CD4-positive, alpha-beta T cell (primary cell): ENCODE measurements at regions of chr7 and their contacts with region 1.

Region 1: DNA sequence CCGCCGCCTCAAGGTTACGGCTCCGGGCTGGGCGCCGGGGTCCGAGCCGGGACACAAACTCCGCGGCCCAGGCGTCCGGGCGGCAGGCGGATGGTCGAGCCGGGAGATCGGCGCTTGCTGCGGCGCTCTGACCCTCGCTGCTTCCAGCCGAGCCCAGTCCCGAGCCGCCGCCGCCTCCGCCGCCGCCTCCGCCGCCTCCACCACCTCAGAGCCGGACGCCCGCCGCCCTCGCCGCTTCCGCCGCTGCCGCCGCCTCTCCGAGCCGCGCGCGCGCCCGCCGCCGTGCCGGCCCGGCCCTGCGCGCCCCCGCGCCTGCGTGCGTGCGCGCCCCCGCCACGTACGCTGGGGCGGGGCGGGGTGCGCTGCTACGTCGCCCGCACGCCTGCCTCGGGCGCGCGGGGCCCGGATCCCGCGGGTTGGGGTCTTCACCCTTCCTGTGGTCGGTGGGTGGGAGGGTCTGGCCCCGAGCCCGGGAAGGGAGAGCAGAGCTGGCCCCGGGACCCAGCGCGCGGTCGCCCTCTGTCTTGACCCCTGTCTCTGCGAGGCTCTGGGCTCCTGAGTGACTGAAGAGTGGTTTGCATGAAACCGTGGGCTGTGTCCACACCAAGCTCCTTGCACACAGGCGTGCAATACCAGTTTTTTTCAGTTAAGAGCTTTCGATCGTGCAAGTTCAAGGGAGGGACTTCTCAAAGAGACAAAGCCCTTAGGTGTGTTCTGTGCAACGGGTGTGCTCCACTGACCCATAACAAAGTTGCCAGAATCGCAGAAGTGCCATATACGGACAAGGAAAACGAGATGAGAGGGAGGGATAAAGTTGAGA is at the start of gene SMURF1:
- DNase-seq: peak; percentile 52 to 93 (median 70)
- ATAC-seq: peak; percentile 42
- H3K4me3 ChIP-seq: peak within 1 kb of the TSS; percentile 88
- H3K4me3 Mint-ChIP-seq: peak within 1 kb of the TSS; percentile 96
- H3K27ac ChIP-seq: peak within 1 kb of the TSS; percentile 64 to 71
- H3K27ac Mint-ChIP-seq: peak within 1 kb of the TSS; percentile 96
- H3K4me1 ChIP-seq: peaks cover 28% of the 10 kb centered on the region
- H3K4me1 Mint-ChIP-seq: peaks cover 40% of the 10 kb centered on the region
- H3K27me3 ChIP-seq: no peaks in the 10 kb centered on the region
- H3K27me3 Mint-ChIP-seq: no peaks in the 10 kb centered on the region
- CTCF ChIP-seq: no peak
- total RNA-seq, gene SMURF1: 30.0 to 32.4 TPM

Region 2: DNA sequence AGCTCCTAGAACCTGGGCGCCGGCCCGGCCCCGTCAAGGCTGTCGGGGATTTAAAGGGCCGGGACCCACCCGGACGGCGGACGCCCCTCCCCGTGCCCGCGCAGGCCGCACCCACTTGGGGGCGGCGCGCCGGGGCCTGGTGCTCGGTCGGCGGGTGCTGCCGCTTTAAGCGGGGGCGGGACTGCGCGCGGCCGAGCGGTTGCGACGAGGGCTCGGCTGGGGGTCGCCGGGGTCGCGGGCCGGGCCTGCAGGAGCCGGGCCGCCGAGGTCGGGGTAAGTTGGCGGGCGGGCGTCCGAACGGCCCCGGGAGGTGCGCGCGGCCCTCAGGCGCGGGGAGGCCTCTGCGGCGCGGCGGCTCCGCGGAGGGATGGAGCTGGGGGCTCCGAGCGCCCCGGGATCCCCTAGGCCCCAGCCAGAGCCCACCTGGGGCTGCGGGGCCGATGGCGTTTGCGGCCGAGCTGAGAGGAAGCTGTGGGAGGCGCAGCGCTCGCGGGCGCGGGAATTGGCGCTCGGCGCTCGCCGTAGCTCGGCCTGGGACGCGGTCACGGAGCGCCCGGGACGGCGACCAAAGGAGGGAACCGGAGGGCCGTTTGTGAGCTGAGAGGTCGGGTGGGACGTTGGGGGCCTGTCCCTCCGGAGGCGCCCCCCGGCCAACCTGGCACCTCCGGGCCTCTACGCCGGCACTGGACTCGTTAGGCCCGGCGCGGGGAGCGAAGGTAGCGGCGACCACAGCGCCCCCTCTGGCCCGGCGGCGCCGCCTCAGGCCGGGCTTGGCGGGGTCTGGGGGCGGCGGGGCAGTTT is 265.5 kb before region 1 on chr7 and contains the start of gene TRRAP:
- CTCF ChIA-PET with region 1: no interaction called
- POLR2A ChIA-PET with region 1: interaction called, 3 read pairs
- intact Hi-C with region 1: loop called in 1 of 2 experiments (anchors 2 kb)
- DNase-seq: peak; percentile 60 to 88 (median 70)
- ATAC-seq: peak; percentile 56
- H3K4me3 ChIP-seq: peak within 1 kb of the TSS; percentile 97
- H3K4me3 Mint-ChIP-seq: peak within 1 kb of the TSS; percentile 97
- H3K27ac ChIP-seq: peak within 1 kb of the TSS; percentile 87 to 91
- H3K27ac Mint-ChIP-seq: peak within 1 kb of the TSS; percentile 97
- H3K4me1 ChIP-seq: peaks cover 27% of the 10 kb centered on the region
- H3K4me1 Mint-ChIP-seq: peaks cover 31% of the 10 kb centered on the region
- H3K27me3 ChIP-seq: no peaks in the 10 kb centered on the region
- H3K27me3 Mint-ChIP-seq: no peaks in the 10 kb centered on the region
- CTCF ChIP-seq: peak; percentile 89
- total RNA-seq, gene TRRAP: 47.9 to 48.3 TPM

Region 3: DNA sequence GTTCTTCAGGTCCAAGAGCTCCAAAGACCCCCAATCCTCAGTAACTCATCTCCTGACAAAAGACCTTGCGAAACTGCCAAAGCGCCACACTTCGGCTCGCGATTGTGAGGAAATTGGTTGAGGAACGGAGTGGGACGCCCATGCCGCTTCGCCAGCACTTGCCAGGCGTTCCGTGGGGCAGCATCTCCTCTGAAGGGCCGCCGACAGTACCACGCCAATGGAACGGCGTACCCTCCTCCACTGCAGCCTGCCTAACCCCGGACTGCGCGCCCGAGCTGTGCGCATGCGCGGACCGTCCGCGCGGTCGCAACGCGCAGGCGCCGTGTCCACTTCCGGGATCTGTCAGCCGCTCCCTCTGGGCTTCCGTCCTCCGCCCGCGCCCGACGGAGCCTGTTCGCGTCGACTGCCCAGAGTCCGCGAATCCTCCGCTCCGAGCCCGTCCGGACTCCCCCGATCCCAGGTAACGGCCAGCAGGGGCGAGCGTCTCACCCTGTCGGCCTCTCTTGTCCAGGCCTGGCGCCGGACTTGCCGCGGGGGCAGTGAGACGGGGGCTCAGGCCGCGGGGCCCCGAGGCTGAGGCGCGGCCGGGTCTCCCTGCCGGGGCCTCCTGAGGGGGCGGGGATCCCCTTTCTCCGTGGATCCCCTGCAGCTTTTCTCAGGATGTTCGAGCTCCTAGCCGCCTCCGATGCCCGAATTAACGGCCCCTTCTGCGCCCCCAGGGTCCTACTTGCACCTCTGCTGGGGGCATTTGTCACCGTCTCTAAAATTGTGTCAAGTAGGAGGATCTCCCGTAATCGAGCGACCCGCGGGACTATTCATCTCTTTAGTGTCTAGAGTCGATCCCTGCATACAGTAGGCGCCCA is 181.7 kb after region 1 on chr7 and contains the start of gene ARPC1A:
- CTCF ChIA-PET with region 1: no interaction called
- POLR2A ChIA-PET with region 1: interaction called, 3 read pairs
- intact Hi-C with region 1: loop called (anchors 5 kb)
- DNase-seq: peak; percentile 83 to 97 (median 91)
- ATAC-seq: peak; percentile 94
- H3K4me3 ChIP-seq: peak within 1 kb of the TSS; percentile 90
- H3K4me3 Mint-ChIP-seq: peak within 1 kb of the TSS; percentile 94
- H3K27ac ChIP-seq: peak within 1 kb of the TSS; percentile 28 to 69
- H3K27ac Mint-ChIP-seq: peak within 1 kb of the TSS; percentile 85
- H3K4me1 ChIP-seq: peaks cover 42% of the 10 kb centered on the region
- H3K4me1 Mint-ChIP-seq: peaks cover 42% of the 10 kb centered on the region
- H3K27me3 ChIP-seq: no peaks in the 10 kb centered on the region
- H3K27me3 Mint-ChIP-seq: no peaks in the 10 kb centered on the region
- CTCF ChIP-seq: no peak
- total RNA-seq, gene ARPC1A: 25.3 to 30.4 TPM

Region 4: DNA sequence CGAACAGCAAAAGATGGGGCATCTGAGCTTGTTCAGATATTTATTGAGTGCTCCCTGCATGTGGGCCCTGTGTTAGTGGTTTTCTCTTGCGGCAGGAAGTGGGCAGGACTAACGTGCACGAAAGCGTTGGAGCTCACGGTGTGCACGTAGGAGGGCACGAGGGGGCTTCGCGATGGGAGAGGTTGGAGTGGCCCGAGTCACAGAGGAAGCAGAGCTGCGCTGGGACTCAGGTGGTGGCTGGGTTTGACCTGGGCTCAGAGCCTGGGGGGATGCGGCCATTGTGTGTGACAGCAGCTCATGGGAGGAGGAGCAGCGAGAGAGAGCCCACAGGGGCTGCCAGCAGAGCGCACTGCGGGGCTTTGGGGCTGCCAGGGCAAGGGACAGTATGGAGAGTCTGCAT is 480.4 kb after region 1 on chr7:
- CTCF ChIA-PET with region 1: no interaction called
- POLR2A ChIA-PET with region 1: no interaction called
- intact Hi-C with region 1: loop called in 1 of 2 experiments (anchors 10 kb)
- DNase-seq: peak; percentile 48 to 91 (median 63)
- ATAC-seq: peak; percentile 96
- H3K4me3 ChIP-seq: peak overlapping the region; percentile 46
- H3K4me3 Mint-ChIP-seq: peak overlapping the region; percentile 85
- H3K27ac ChIP-seq: peak overlapping the region; percentile 66 to 67
- H3K27ac Mint-ChIP-seq: peak overlapping the region; percentile 92
- H3K4me1 ChIP-seq: peaks cover 39% of the 10 kb centered on the region
- H3K4me1 Mint-ChIP-seq: peaks cover 49% of the 10 kb centered on the region
- H3K27me3 ChIP-seq: no peaks in the 10 kb centered on the region
- H3K27me3 Mint-ChIP-seq: no peaks in the 10 kb centered on the region
- CTCF ChIP-seq: no peak